ENCODE measurements at regions of chr1 and their contacts with region 1.

Region 1: GRCh38 chr1:147541672-147542568 is 619 bp downstream of the BCL9 start:
- DNase-seq: peak; percentile 45 to 65
- ATAC-seq: peak; percentile 40 to 58 (median 47)
- H3K4me3 ChIP-seq: peak overlapping the region; percentile 68
- H3K27ac ChIP-seq: peak overlapping the region; percentile 88
- H3K4me1 ChIP-seq: peaks cover 53% of the 10 kb centered on the region
- H3K27me3 ChIP-seq: no peaks in the 10 kb centered on the region
- CTCF ChIP-seq: no peak

Region 2: GRCh38 chr1:147599362-147600118 is 57.6 kb after region 1 on chr1:
- intact Hi-C with region 1: loop called (anchors 2 kb)
- DNase-seq: peak; percentile 98 to 99
- ATAC-seq: peak; percentile 91 to 94 (median 92)
- H3K4me3 ChIP-seq: peak overlapping the region; percentile 98
- H3K27ac ChIP-seq: peak overlapping the region; percentile 98
- H3K4me1 ChIP-seq: peaks cover 14% of the 10 kb centered on the region
- H3K27me3 ChIP-seq: no peaks in the 10 kb centered on the region
- CTCF ChIP-seq: no peak

Measured in psoas muscle (tissue), 8 donors.